Activated CD4-positive, alpha-beta memory T cell treated with anti-CD3 and anti-CD28 coated beads, Interleukin-2, amount 10 ng/mL, durations not matched to agents 7 days and 5 days (primary cell): ENCODE measurements at regions of chr3 and their contacts with region 1.

Region 1: GRCh38 chr3:159260049-159260662 is 458.3 kb downstream of the MFSD1 start:
- DNase-seq: peak; percentile 24
- H3K4me3 Mint-ChIP-seq: no peak overlapping the region
- H3K27ac Mint-ChIP-seq: no peak overlapping the region
- H3K4me1 Mint-ChIP-seq: no peaks in the 10 kb centered on the region
- H3K27me3 Mint-ChIP-seq: peaks cover 10% of the 10 kb centered on the region

Region 2: DNA sequence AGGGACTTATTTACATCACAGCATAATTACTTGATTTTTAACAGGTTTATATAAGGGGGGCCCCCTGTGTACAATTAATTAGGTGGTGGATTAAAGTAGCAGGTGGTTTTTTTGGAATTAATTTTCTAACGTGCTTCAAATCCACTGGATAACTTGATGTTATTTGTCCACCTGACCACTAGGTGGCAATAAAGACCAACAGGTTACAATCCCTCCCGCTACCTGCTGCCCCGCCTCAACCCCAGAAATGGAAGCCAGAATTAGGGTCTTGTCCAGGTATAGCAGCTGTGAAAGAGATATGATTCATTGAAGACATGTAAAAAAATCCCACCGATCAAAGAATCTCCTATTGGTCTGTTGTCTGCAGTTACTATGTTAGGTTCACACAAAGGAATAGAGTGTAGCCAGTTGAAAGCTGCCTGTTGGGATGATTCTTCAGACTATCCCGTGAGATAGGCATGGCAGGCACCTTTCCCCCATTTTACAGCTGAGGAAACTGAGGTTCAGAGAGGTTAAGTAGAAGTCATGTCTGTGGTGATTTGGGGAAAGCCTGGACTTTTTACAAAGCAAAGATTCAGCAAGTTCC is 414.3 kb before region 1 on chr3:
- CTCF ChIA-PET with region 1: interaction called, 28 read pairs
- POLR2A ChIA-PET with region 1: no interaction called
- DNase-seq: peak; percentile 31
- H3K4me3 Mint-ChIP-seq: no peak overlapping the region
- H3K27ac Mint-ChIP-seq: no peak overlapping the region
- H3K4me1 Mint-ChIP-seq: peaks cover 9% of the 10 kb centered on the region
- H3K27me3 Mint-ChIP-seq: no peaks in the 10 kb centered on the region

Region 3: GRCh38 chr3:158961911-158962310 is 298.2 kb before region 1 on chr3:
- CTCF ChIA-PET with region 1: no interaction called
- POLR2A ChIA-PET with region 1: no interaction called
- DNase-seq: no peak
- H3K4me3 Mint-ChIP-seq: no peak overlapping the region
- H3K27ac Mint-ChIP-seq: no peak overlapping the region
- H3K4me1 Mint-ChIP-seq: no peaks in the 10 kb centered on the region
- H3K27me3 Mint-ChIP-seq: no peaks in the 10 kb centered on the region

Region 4: DNA sequence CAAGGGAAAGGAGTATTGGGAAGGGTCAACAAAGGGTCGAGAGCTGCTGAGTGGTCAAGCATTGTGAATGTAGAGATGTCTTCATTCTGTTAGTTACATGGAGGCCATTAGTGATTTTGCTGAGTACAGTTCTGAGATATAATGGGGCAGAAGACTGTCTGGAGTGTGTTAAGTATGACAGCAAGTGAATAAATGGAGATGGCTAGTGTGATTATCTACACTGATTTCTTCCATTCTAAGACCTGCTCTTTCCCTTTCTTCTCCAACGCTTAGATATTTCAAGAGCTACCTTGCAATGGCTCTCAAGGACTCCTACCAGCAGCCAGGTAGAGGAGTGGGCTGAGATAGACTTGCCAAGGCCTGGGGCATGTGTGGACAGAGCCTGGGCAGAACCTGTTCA is 241.8 kb before region 1 on chr3:
- CTCF ChIA-PET with region 1: no interaction called
- POLR2A ChIA-PET with region 1: no interaction called
- DNase-seq: no peak
- H3K4me3 Mint-ChIP-seq: no peak overlapping the region
- H3K27ac Mint-ChIP-seq: no peak overlapping the region
- H3K4me1 Mint-ChIP-seq: no peaks in the 10 kb centered on the region
- H3K27me3 Mint-ChIP-seq: no peaks in the 10 kb centered on the region

Region 5: GRCh38 chr3:159804726-159805410 is 544.7 kb after region 1 on chr3:
- CTCF ChIA-PET with region 1: interaction called, 18 read pairs
- POLR2A ChIA-PET with region 1: no interaction called
- DNase-seq: peak; percentile 34
- H3K4me3 Mint-ChIP-seq: no peak overlapping the region
- H3K27ac Mint-ChIP-seq: no peak overlapping the region
- H3K4me1 Mint-ChIP-seq: no peaks in the 10 kb centered on the region
- H3K27me3 Mint-ChIP-seq: peaks cover 19% of the 10 kb centered on the region